ENCODE measurements at regions of chr17 and their contacts with region 1.

Region 1: DNA sequence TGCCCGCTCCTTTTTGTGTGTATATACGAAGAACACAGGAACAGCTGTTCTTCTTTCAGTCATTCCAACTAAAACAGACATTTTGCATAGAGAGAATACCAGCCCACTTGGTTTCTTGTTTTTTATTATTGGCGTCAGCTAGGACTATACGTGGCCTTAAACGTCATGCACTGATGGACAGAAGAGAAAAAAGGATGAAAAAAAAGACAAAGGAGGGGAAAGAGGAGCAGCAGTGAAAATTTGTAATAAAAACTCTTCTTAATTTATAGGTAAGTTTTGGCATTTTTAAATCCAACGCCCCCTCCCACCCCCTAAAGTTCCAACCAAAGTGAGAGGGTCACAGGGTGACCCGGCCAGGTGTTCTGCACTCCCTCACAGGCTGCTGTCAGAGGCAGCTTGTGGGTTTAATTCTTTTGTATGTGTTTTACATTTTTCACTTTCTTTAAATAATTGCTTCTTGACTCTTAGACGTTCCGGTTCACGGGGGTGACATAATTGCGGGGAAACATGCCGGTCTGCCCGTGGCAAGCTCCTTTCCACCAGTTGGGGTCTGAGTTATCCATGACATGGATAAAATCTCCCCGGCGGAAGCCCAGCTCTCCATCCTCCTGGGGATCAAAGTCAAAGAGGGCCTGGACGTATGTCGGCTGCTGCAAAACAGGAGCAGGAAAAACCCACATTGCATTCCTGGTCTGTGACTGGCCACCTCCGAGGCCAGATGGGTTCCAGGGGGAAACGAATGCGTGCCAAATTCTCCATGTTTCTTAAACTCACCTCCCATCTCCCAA is 30.9 kb upstream of the SLC25A19 start:
- DNase-seq: no peak
- H3K4me3 ChIP-seq: no peak overlapping the region
- H3K27ac ChIP-seq: no peak overlapping the region
- H3K4me1 ChIP-seq: no peaks in the 10 kb centered on the region
- H3K27me3 ChIP-seq: no peaks in the 10 kb centered on the region
- CTCF ChIP-seq: no peak

Region 2: GRCh38 chr17:75219815-75220214 is 100.3 kb before region 1 on chr17:
- CTCF ChIA-PET with region 1: no interaction called
- POLR2A ChIA-PET with region 1: no interaction called
- intact Hi-C with region 1: no loop called
- DNase-seq: no peak
- H3K4me3 ChIP-seq: no peak overlapping the region
- H3K27ac ChIP-seq: no peak overlapping the region
- H3K4me1 ChIP-seq: no peaks in the 10 kb centered on the region
- H3K27me3 ChIP-seq: no peaks in the 10 kb centered on the region
- CTCF ChIP-seq: no peak

Region 3: GRCh38 chr17:75289115-75289831 is 30.8 kb before region 1 on chr17 and contains the start of gene SLC25A19:
- CTCF ChIA-PET with region 1: interaction called, 15 read pairs
- POLR2A ChIA-PET with region 1: interaction called, 3 read pairs
- intact Hi-C with region 1: no loop called
- DNase-seq: peak; percentile 99
- H3K4me3 ChIP-seq: peak within 1 kb of the TSS; percentile 87
- H3K27ac ChIP-seq: peak within 1 kb of the TSS; percentile 90
- H3K4me1 ChIP-seq: no peaks in the 10 kb centered on the region
- H3K27me3 ChIP-seq: no peaks in the 10 kb centered on the region
- CTCF ChIP-seq: no peak
- total RNA-seq, gene SLC25A19: 40.0 and 45.0 TPM in 2 replicates

Region 4: GRCh38 chr17:75307957-75308770 is 11.9 kb before region 1 on chr17:
- CTCF ChIA-PET with region 1: interaction called, 15 read pairs
- POLR2A ChIA-PET with region 1: no interaction called
- intact Hi-C with region 1: no loop called
- DNase-seq: no peak
- H3K4me3 ChIP-seq: no peak overlapping the region
- H3K27ac ChIP-seq: no peak overlapping the region
- H3K4me1 ChIP-seq: no peaks in the 10 kb centered on the region
- H3K27me3 ChIP-seq: no peaks in the 10 kb centered on the region
- CTCF ChIP-seq: no peak

Region 5: GRCh38 chr17:75338335-75338734 is 18.2 kb after region 1 on chr17:
- CTCF ChIA-PET with region 1: interaction called, 17 read pairs
- POLR2A ChIA-PET with region 1: no interaction called
- intact Hi-C with region 1: no loop called
- DNase-seq: no peak
- H3K4me3 ChIP-seq: no peak overlapping the region
- H3K27ac ChIP-seq: peak overlapping the region; percentile 29
- H3K4me1 ChIP-seq: peaks cover 22% of the 10 kb centered on the region
- H3K27me3 ChIP-seq: no peaks in the 10 kb centered on the region
- CTCF ChIP-seq: no peak

Region 6: GRCh38 chr17:75393523-75394331 is 73.6 kb after region 1 on chr17:
- CTCF ChIA-PET with region 1: interaction called, 14 read pairs
- POLR2A ChIA-PET with region 1: no interaction called
- intact Hi-C with region 1: no loop called
- DNase-seq: peak; percentile 99
- H3K4me3 ChIP-seq: peak overlapping the region; percentile 52
- H3K27ac ChIP-seq: peak overlapping the region; percentile 58
- H3K4me1 ChIP-seq: peaks cover 17% of the 10 kb centered on the region
- H3K27me3 ChIP-seq: no peaks in the 10 kb centered on the region
- CTCF ChIP-seq: no peak

Region 7: DNA sequence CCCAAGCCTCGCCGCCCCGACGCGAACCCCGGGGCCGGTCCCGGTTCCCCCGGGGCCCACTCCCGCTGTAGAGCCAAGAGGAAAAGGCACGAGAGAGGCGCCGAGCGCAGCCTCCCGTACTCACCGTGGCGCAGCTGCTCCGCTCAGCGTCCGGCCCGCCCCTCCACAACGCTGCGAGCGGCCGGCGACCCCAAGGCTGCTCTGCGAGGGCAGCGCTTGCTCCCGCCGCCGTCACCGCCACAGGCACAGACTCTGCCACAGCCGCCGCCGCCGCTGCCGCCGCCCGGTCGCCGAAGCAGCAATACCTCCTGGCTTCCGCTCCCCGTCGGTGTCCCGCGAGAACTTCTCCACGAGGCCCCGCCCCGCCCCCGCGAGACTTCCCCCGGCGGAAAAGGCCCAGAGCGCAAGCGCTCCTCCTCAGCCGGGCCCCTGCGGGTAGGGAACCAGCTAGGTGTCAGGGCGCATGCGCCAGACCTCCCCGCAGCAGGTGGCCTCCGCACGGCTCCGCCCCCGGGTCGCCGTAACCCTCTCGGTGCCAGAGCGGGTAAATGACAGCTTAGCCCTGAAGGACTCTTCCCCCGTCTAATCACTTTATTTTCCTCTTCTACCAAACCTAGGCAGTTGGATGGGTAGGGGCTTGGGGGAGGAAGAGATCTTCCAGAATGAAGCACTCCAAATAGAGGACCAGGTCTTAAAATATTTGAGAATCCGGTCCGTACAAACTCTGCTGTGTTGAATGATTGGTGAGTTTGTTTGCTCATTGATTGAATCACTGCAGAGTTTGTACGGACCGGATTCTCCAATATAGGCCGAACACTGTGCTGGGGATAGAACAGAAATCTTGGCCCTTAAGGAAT is 85.5 kb after region 1 on chr17 and contains the start of gene GRB2:
- CTCF ChIA-PET with region 1: interaction called, 16 read pairs
- POLR2A ChIA-PET with region 1: no interaction called
- intact Hi-C with region 1: loop called (anchors 1 kb)
- DNase-seq: peak; percentile 99
- H3K4me3 ChIP-seq: peak within 1 kb of the TSS; percentile 99
- H3K27ac ChIP-seq: peak within 1 kb of the TSS; percentile 90
- H3K4me1 ChIP-seq: no peaks in the 10 kb centered on the region
- H3K27me3 ChIP-seq: no peaks in the 10 kb centered on the region
- CTCF ChIP-seq: no peak
- total RNA-seq, gene GRB2: 95.2 and 101 TPM in 2 replicates